Activated CD4-positive, alpha-beta T cell treated with anti-CD3 and anti-CD28 coated beads, Interleukin-2, amount 10 ng/mL, durations not matched to agents 24 days and 14 days (primary cell): ENCODE measurements at regions of chr10 and their contacts with region 1.

Region 1: DNA sequence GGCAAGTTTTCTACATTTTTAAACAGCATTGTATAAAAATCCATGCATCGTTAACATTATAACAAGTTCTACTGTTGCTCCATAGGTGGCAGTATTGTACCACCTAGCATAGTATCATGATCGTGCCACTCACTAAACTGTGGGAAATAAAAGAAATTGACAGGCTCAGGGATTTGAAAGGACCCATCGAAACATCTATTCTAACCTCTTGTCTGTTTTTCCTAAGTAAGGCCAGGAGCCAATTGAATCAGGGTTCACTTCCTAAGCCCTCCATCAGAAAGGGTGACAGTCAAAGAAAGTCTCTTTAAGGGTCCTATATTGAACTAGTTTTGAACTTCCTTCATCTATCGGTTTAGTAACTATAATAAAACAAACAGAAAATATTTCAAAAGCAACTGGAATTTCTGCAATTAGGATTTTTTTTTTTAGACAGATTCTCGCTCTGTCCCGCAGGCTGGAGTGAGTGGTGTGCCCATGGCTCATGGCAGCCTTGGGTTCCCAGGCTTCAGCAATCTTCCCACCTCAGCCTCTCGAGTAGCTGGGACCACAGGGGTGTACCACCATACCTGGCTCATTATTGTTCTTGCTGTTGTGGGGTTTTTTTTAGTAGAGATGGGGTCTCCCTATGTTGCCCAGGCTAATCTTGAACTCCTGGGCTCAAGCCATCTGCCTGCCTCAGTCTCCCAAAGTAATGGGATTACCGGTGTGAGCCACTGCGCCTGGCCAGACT is 9.4 kb downstream of the HACD1 start:
- DNase-seq: peak; percentile 79
- H3K4me3 Mint-ChIP-seq: no peak overlapping the region
- H3K27ac Mint-ChIP-seq: no peak overlapping the region
- H3K4me1 Mint-ChIP-seq: no peaks in the 10 kb centered on the region
- H3K27me3 Mint-ChIP-seq: peaks cover 2% of the 10 kb centered on the region

Region 2: DNA sequence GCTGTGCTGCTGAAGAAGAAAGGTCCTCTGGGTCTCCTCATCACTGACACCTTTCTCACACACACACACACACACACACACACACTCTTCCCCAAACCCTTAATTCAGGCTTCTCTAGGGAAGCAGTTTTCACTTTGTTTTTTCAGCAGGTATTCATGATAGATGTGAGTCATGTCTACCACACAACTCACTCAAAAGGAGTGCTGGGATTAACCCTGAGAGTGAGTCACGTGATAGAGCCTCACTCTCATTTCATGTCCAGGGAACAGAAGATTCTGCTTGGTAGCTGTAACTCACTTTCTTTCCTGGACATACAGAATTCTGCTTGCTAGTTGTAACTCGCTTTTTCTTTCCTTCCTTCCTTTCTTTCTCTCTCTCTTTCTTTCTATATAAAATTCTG is 334.4 kb before region 1 on chr10:
- intact Hi-C with region 1: no loop called
- DNase-seq: no peak
- H3K4me3 Mint-ChIP-seq: no peak overlapping the region
- H3K27ac Mint-ChIP-seq: no peak overlapping the region
- H3K4me1 Mint-ChIP-seq: peaks cover 3% of the 10 kb centered on the region
- H3K27me3 Mint-ChIP-seq: peaks cover 5% of the 10 kb centered on the region

Region 3: GRCh38 chr10:17742918-17743317 is 135.2 kb after region 1 on chr10:
- intact Hi-C with region 1: loop called (anchors 1 kb)
- DNase-seq: peak; percentile 90
- H3K4me3 Mint-ChIP-seq: no peak overlapping the region
- H3K27ac Mint-ChIP-seq: no peak overlapping the region
- H3K4me1 Mint-ChIP-seq: peaks cover 9% of the 10 kb centered on the region
- H3K27me3 Mint-ChIP-seq: no peaks in the 10 kb centered on the region

Region 4: GRCh38 chr10:18104223-18104872 is 496.6 kb after region 1 on chr10:
- intact Hi-C with region 1: loop called (anchors 1 kb)
- DNase-seq: peak; percentile 79
- H3K4me3 Mint-ChIP-seq: no peak overlapping the region
- H3K27ac Mint-ChIP-seq: no peak overlapping the region
- H3K4me1 Mint-ChIP-seq: no peaks in the 10 kb centered on the region
- H3K27me3 Mint-ChIP-seq: no peaks in the 10 kb centered on the region

Region 5: DNA sequence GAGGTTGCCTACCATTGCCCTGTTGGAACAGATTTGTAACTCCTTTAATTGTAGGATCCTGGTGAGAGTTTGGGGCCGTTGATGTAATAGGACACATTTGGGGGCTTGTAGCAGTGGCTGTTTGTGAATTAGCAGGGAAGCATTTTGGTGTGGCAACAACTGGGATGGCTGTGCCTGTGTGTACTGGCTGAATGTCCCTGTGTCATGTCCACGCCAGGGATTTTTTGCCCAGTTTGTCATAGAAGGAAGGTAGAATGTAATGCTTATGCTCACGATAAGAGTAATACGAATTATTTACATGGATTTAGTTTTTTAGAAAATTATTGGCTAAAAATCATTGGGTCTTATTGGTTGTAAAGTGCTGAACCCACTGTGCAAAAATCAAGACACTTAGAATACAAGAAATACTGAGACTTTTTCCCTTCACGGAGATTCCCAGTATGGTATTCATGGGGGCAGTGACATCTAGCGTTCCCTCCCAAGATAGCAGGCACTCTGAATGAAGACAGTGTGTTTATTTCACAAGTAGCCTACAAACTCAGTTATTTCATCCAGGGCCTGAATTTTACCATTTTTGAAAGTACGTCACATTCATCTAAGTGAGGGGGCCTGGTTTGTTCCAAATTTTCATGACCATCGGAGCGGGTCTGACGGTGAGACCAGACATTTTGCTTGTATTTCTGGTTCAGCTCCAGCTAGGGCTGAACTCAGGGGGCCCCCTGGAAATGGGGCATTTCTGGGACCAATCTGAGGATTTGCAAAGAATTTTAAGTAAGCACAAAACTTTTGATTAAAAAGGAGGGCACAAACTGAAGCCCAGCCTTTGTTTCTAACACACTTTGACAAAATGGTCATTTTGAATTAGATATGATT is 607.2 kb after region 1 on chr10:
- intact Hi-C with region 1: loop called (anchors 10 kb)
- DNase-seq: peak; percentile 60
- H3K4me3 Mint-ChIP-seq: no peak overlapping the region
- H3K27ac Mint-ChIP-seq: no peak overlapping the region
- H3K4me1 Mint-ChIP-seq: no peaks in the 10 kb centered on the region
- H3K27me3 Mint-ChIP-seq: no peaks in the 10 kb centered on the region